GM10248 (cell line): ENCODE measurements at regions of chr1 and their contacts with region 1.

Region 1: DNA sequence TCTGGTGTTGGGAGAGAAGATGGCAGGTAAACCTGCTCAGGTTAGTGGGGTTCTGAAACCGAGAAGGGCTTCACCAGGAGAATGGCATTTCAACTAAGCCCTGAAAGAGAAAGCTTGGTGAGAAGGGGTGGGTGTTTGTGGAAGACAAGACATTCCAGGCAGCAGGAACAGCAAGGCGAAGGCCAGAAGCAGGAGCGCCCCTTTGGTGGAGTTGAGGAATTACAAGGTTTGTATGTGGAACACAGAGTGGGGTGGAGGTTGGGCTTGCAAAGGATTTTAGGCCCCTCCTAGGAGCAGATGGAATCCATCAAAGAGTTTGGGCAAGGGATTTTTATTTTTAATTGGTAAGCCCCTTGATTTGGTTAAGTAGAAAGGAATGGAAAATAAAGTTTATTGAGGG is 24.8 kb upstream of the ELOA start:
- DNase-seq: no peak
- CTCF ChIP-seq: peak; percentile 41

Region 2: GRCh38 chr1:23470282-23471071 is 248.0 kb before region 1 on chr1:
- CTCF ChIA-PET with region 1: no interaction called
- POLR2A ChIA-PET with region 1: no interaction called
- DNase-seq: no peak
- CTCF ChIP-seq: no peak

Region 3: GRCh38 chr1:23699280-23700179 is 19.0 kb before region 1 on chr1:
- CTCF ChIA-PET with region 1: interaction called, 22 read pairs
- POLR2A ChIA-PET with region 1: interaction called, 4 read pairs
- DNase-seq: no peak
- CTCF ChIP-seq: no peak